ENCODE measurements at regions of chr12 and their contacts with region 1.

Region 1: GRCh38 chr12:70242695-70243509 is at the start of gene CNOT2:
- DNase-seq: peak; percentile 91 to 97 (median 91)
- H3K4me3 ChIP-seq: peak within 1 kb of the TSS; percentile 90 to 97 (median 94)
- H3K4me3 Mint-ChIP-seq: peak within 1 kb of the TSS; percentile 98
- H3K27ac ChIP-seq: peak within 1 kb of the TSS; percentile 98 to 99
- H3K27ac Mint-ChIP-seq: peak within 1 kb of the TSS; percentile 99 to 100 (median 100)
- H3K4me1 ChIP-seq: peaks cover 22 to 49% of the 10 kb centered on the region in 2 donors
- H3K4me1 Mint-ChIP-seq: peaks cover 44% of the 10 kb centered on the region
- H3K27me3 ChIP-seq: no peaks in the 10 kb centered on the region
- H3K27me3 Mint-ChIP-seq: no peaks in the 10 kb centered on the region
- CTCF ChIP-seq: no peak
- polyA plus RNA-seq, gene CNOT2: 49.8 to 77.2 (median 72.7) TPM

Region 2: GRCh38 chr12:70290116-70290515 is 47.2 kb after region 1 on chr12:
- intact Hi-C with region 1: loop called in 1 of 2 experiments (anchors 10 kb)
- DNase-seq: no peak
- H3K4me3 ChIP-seq: no peak overlapping the region
- H3K4me3 Mint-ChIP-seq: no peak overlapping the region
- H3K27ac ChIP-seq: peak overlapping the region in 1 of 2 donors; percentile 37
- H3K27ac Mint-ChIP-seq: peak overlapping the region in 3 of 7 donors; percentile 8 to 70 (median 39)
- H3K4me1 ChIP-seq: peaks cover 0 to 3% of the 10 kb centered on the region in 2 donors
- H3K4me1 Mint-ChIP-seq: peaks cover 10% of the 10 kb centered on the region
- H3K27me3 ChIP-seq: no peaks in the 10 kb centered on the region
- H3K27me3 Mint-ChIP-seq: no peaks in the 10 kb centered on the region
- CTCF ChIP-seq: no peak

Region 3: GRCh38 chr12:70354787-70355186 is 111.9 kb after region 1 on chr12:
- intact Hi-C with region 1: loop called in 1 of 2 experiments (anchors 5 kb)
- DNase-seq: peak; percentile 41 to 66 (median 45)
- H3K4me3 ChIP-seq: peak overlapping the region in 2 of 3 experiments; percentile 16 to 67
- H3K4me3 Mint-ChIP-seq: peak overlapping the region in 1 of 2 donors; percentile 48
- H3K27ac ChIP-seq: peak overlapping the region; percentile 63 to 70
- H3K27ac Mint-ChIP-seq: peak overlapping the region; percentile 82 to 94 (median 89)
- H3K4me1 ChIP-seq: peaks cover 26 to 34% of the 10 kb centered on the region in 2 donors
- H3K4me1 Mint-ChIP-seq: peaks cover 32% of the 10 kb centered on the region
- H3K27me3 ChIP-seq: no peaks in the 10 kb centered on the region
- H3K27me3 Mint-ChIP-seq: no peaks in the 10 kb centered on the region
- CTCF ChIP-seq: no peak